ENCODE measurements at regions of chr6 and their contacts with region 1.

Region 1: GRCh38 chr6:135183532-135184440 is 2.7 kb downstream of the MYB start:
- DNase-seq: peak; percentile 87
- H3K4me3 Mint-ChIP-seq: peak overlapping the region; percentile 89
- H3K27ac Mint-ChIP-seq: peak overlapping the region; percentile 87
- H3K4me1 Mint-ChIP-seq: peaks cover 32% of the 10 kb centered on the region
- H3K27me3 Mint-ChIP-seq: no peaks in the 10 kb centered on the region

Region 2: GRCh38 chr6:135162678-135163439 is 20.9 kb before region 1 on chr6:
- CTCF ChIA-PET with region 1: interaction called, 29 read pairs
- DNase-seq: peak; percentile 47
- H3K4me3 Mint-ChIP-seq: no peak overlapping the region
- H3K27ac Mint-ChIP-seq: no peak overlapping the region
- H3K4me1 Mint-ChIP-seq: peaks cover 36% of the 10 kb centered on the region
- H3K27me3 Mint-ChIP-seq: peaks cover 3% of the 10 kb centered on the region

Measured in activated naive CD4-positive, alpha-beta T cell treated with anti-CD3 and anti-CD28 coated beads, Interleukin-2, amount 10 ng/mL, durations not matched to agents 7 days and 5 days (primary cell).